Mammary epithelial cell (primary cell): ENCODE measurements at regions of chr11 and their contacts with region 1.

Region 1: DNA sequence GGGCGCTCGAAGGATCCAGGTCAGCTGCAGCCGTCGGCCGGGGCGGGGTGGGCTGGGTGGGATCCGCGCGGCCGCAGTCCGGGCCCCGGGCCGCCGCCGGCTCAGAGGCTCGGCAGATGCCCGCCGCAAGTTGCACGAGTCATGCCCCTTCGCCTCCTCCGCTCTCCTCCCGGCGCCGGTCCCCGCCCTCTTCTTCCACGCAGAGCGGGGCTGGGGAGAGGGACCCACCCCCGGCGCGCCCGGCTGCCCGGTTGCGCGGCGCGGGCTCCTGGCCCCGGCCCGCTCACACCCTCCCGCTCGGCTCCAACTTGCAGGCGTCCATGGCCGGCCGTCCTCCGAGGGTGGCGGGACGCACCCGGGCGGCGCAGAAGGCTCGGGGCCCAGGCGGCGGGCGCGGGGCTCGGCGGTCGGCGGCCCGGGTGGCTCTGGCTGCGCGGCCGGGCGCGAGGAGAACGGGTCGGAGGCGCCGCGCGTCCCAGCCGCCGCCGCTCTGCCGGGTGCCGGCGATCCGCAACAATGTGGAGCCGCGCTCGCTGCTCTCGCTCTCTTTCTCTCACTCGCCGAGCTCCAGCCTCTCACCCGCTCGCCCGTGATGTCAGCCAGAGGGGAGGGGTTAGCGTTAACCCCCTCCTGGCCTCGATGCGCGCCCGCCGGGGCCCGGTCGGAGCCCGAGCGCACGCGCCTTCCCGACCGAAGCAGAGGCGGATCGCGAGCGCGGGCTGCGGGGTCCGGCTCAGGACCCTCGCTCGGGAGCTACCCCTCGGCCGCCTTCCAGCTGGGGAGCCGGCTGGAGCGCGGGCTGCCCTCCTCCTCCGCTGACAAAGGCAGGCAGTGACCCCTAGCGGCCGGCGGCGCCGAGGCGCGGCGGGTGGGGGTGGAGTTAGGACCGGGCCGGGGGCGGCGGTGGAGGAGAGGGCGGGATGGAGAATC is at the start of gene NECTIN1:
- DNase-seq: peak; percentile 86
- H3K4me3 ChIP-seq: peak within 1 kb of the TSS; percentile 79 to 92 (median 88)
- H3K27ac ChIP-seq: peak within 1 kb of the TSS; percentile 74
- H3K4me1 ChIP-seq: peaks cover 33% of the 10 kb centered on the region
- H3K27me3 ChIP-seq: no peaks in the 10 kb centered on the region
- CTCF ChIP-seq: peak; percentile 48 to 92
- total RNA-seq, gene NECTIN1: 60.8 to 162 TPM

Region 2: DNA sequence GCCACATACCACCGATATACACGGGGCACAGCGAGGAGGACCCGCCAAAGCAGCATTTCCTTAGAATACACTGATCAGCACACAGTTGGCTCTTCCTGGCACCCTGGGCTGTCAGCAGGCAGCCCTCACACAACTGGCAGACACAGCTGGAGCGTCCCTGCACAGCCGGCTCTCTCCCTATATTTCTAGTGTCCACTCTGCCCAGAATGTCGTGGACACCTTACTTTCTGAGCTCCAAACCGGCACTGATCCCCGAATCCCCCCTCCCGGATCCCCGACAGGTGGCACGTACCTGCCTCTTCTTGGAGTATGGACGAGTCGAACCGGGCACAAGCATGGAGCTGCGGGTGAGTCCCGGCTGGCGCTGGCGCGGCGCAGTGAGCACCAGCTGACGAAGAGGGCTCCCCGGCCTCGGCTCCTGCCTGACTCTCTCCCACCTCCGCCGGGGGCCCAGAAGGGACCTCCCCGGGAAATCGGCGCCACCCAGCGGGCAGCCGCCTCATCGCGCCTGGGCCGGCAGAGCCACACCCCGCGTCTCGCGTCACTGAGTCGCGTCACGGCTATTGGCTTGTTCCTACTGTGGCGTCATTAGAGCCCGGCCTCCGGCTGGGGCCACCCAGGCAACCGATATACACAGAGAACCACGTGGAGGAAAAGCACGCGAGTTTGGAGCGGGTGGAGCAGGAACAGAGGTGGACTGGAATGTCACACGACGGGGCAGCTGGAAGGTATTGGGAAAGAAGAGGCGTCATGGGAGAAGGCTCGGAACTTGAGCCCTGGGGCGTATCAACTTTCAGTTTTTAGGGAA is 347.5 kb before region 1 on chr11 and contains the start of gene USP2:
- CTCF ChIA-PET with region 1: no interaction called
- dilution Hi-C with region 1: no loop called
- in situ Hi-C with region 1: no loop called
- intact Hi-C with region 1: loop called (anchors 10 kb)
- DNase-seq: peak; percentile 97
- H3K4me3 ChIP-seq: peak within 1 kb of the TSS; percentile 48 to 60 (median 55)
- H3K27ac ChIP-seq: peak within 1 kb of the TSS; percentile 90
- H3K4me1 ChIP-seq: peaks cover 38% of the 10 kb centered on the region
- H3K27me3 ChIP-seq: no peaks in the 10 kb centered on the region
- CTCF ChIP-seq: peak; percentile 62 to 89
- total RNA-seq, gene USP2: 2.7 to 3.0 TPM

Region 3: DNA sequence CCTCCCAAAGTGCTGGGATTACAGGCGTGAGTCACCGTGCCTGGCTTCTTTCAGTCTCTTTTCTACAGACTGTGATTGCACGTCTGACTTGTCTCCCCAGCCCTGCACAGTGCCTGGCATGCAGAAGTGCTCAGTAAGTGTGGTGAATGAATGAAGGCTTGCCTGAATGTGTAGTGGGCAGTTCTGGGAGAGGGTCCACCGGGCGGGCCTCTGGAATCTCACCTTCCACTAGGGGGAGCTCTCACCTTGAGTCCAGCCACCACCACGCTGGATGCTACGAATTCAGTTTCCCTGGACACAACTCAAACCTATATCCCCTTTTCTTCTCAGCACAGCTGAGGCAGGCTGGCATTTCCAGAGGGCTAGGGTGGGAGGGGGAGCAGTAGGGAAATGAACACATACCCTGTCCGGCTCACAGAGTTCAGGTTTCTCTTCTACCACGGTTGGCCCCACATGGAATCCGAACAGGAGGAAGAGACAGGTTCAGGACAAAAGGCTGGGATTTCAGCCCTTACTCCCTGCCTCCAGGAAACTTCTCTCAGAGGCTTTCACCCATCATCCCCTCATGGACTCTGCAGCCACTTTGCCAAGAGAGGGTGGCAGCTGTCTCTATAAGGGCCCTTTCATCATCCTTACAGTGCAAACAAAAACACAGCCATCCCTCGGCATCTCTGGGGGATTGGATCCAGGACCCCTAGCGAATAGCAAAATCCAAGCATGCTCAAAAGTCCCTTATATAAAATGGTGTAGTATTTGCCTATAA is 86.8 kb before region 1 on chr11:
- CTCF ChIA-PET with region 1: interaction called, 3 read pairs
- dilution Hi-C with region 1: no loop called
- in situ Hi-C with region 1: no loop called
- intact Hi-C with region 1: loop called (anchors 1 kb)
- DNase-seq: peak; percentile 15
- H3K4me3 ChIP-seq: no peak overlapping the region
- H3K27ac ChIP-seq: no peak overlapping the region
- H3K4me1 ChIP-seq: no peaks in the 10 kb centered on the region
- H3K27me3 ChIP-seq: no peaks in the 10 kb centered on the region
- CTCF ChIP-seq: peak; percentile 59 to 84

Region 4: GRCh38 chr11:119673759-119674336 is 55.1 kb before region 1 on chr11:
- CTCF ChIA-PET with region 1: interaction called, 5 read pairs
- dilution Hi-C with region 1: no loop called
- in situ Hi-C with region 1: loop called (anchors 5 to 10 kb)
- intact Hi-C with region 1: no loop called
- DNase-seq: no peak
- H3K4me3 ChIP-seq: no peak overlapping the region
- H3K27ac ChIP-seq: no peak overlapping the region
- H3K4me1 ChIP-seq: peaks cover 38% of the 10 kb centered on the region
- H3K27me3 ChIP-seq: no peaks in the 10 kb centered on the region
- CTCF ChIP-seq: peak in 1 of 2 donors; percentile 30

Region 5: GRCh38 chr11:119694334-119694733 is 34.6 kb before region 1 on chr11:
- CTCF ChIA-PET with region 1: interaction called, 9 read pairs
- dilution Hi-C with region 1: no loop called
- in situ Hi-C with region 1: no loop called
- intact Hi-C with region 1: loop called (anchors 1 kb)
- DNase-seq: peak; percentile 56
- H3K4me3 ChIP-seq: no peak overlapping the region
- H3K27ac ChIP-seq: peak overlapping the region; percentile 97
- H3K4me1 ChIP-seq: peaks cover 99% of the 10 kb centered on the region
- H3K27me3 ChIP-seq: no peaks in the 10 kb centered on the region
- CTCF ChIP-seq: peak; percentile 14 to 35

Region 6: DNA sequence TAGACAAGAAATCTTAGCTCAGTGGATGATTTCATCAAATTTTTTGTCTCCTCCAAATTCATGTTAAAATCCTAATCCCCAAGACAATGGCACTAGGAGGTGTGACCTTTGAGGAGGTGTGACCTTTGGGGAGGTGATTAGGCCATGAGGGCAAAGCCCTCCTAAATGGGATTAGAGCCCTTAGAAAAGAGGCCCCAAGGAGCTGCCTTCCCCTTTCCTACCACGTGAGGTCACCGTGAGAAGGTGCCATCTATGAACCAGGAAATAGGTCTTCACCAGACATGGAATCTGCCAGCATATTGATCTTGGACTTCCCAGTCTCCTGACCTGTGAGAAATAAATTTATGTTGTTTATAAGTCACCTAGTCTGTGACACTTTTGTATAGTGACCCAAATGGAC is 270.3 kb after region 1 on chr11:
- CTCF ChIA-PET with region 1: no interaction called
- dilution Hi-C with region 1: no loop called
- in situ Hi-C with region 1: no loop called
- intact Hi-C with region 1: loop called (anchors 10 kb)
- DNase-seq: peak; percentile 6
- H3K4me3 ChIP-seq: no peak overlapping the region
- H3K27ac ChIP-seq: no peak overlapping the region
- H3K4me1 ChIP-seq: peaks cover 9% of the 10 kb centered on the region
- H3K27me3 ChIP-seq: no peaks in the 10 kb centered on the region
- CTCF ChIP-seq: peak; percentile 40 to 56